Activated B cell treated with CpG ODN at 0.5 μM for 24 hours (primary cell): ENCODE measurements at regions of chr6 and their contacts with region 1.

Region 1: GRCh38 chr6:163956571-163957407 is 542.3 kb downstream of the QKI start:
- DNase-seq: peak; percentile 53
- ATAC-seq: peak; percentile 88
- H3K4me3 Mint-ChIP-seq: no peak overlapping the region
- H3K27ac Mint-ChIP-seq: no peak overlapping the region
- H3K4me1 Mint-ChIP-seq: peaks cover 5% of the 10 kb centered on the region
- H3K27me3 Mint-ChIP-seq: peaks cover 20% of the 10 kb centered on the region
- CTCF ChIP-seq: no peak

Region 2: DNA sequence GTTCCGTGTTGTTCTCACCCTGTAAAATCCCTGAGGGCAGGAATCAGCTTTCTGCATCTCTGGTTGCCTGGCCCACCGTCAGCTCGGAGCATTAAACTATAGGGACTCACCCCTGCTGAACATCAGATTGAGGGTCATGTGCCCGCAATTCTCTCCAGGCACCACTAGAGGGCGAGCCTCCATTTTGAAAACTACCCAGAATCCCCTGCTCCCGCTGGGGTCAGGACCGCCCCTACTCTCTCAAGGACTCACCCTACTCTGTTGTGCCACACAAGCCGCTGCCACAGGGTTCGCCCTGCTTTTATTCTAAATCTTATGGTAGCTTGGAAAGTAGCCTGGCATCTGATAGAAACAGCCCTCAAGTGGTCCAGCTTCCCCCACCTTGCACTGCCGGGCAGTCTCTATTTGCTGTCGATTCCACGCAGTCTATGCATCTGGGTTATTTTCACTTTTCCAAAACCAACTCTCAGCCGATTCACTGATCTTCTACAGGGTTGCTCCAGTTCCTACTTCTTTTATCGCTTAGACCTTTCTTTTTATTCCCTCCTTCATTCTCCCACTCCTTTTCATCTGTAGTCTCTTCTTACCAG is 786.4 kb before region 1 on chr6:
- CTCF ChIA-PET with region 1: interaction called, 10 read pairs
- POLR2A ChIA-PET with region 1: no interaction called
- intact Hi-C with region 1: no loop called
- DNase-seq: no peak
- ATAC-seq: peak; percentile 58
- H3K4me3 Mint-ChIP-seq: no peak overlapping the region
- H3K27ac Mint-ChIP-seq: no peak overlapping the region
- H3K4me1 Mint-ChIP-seq: no peaks in the 10 kb centered on the region
- H3K27me3 Mint-ChIP-seq: peaks cover 4% of the 10 kb centered on the region
- CTCF ChIP-seq: no peak

Region 3: DNA sequence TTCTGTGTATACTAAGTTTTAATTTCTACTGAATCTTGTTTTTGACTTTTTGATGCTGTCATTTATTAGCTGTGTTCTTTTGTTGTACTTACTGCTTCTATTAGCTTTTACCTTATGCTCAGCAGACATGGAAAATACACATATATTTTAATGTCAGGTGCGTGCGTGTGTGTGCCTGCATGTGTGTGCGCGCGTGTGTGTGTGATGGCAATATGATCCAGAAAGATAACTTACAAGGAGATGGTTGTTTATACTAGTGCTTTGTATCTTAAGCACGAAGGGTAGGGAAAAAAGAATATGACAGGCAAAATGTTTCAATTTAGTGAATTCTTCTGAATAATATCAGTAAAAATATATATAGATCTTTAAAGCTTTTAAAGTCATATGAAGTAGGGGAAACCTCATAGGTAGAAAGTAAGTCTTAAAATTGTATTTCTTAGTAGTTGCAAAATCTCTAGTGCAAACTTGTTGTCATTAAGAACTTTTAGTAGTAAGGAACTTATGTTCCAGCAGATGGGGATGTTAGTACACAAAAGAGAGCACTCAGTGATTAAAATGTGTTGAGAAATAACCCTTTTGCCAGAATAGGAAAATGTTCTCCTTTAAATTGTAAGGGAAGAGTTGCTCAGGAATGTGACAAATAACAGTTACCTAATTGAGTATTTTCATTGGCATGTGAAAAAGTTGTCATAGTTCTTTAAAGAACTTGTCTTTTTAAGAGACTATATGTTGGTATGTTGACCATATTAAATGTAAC is 529.1 kb before region 1 on chr6:
- CTCF ChIA-PET with region 1: interaction called, 28 read pairs
- POLR2A ChIA-PET with region 1: no interaction called
- intact Hi-C with region 1: loop called (anchors 1 kb)
- DNase-seq: no peak
- ATAC-seq: no peak
- H3K4me3 Mint-ChIP-seq: no peak overlapping the region
- H3K27ac Mint-ChIP-seq: no peak overlapping the region
- H3K4me1 Mint-ChIP-seq: peaks cover 45% of the 10 kb centered on the region
- H3K27me3 Mint-ChIP-seq: no peaks in the 10 kb centered on the region
- CTCF ChIP-seq: no peak

Region 4: DNA sequence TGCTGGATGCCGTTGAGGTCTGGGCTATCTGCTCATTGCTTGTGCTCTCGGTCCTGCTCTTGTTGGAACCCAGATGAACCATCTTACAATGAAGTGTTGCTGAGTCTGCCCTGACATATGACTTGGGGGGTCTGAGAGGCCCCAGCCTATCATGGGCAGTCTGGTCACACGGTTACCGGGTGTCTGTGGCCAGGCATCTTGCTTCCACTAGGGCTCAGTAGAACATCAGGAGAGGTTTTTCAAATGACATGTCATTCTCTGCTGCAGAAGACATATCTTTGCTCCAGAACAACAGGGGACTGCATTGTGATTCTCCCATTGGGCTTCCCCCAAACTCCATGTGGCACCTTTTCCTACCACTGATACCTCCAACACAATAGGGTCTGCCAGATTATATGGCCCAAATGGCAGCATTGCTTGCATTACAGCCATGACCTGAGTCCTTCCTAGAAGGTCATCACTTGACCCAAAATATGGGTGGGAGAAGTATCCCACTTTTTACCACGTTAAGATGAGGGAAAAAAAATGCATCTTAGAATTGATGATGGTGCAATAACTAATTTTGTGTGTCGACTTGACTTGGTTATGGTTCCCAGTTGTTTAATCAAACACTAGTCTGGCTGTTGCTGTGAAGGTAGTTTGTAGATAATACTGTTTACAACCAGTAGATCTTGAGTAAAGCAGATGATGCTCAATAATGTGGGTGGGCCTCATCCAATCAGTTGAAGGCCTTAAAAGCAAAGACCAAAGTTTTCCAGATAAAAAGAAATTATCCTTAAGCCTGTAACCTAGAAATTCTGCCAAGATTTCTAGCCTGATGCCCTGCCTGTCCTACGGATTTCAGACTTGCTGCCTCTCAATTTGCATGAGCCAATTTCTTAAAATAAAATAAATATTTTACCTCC is 301.3 kb before region 1 on chr6:
- CTCF ChIA-PET with region 1: interaction called, 3 read pairs
- POLR2A ChIA-PET with region 1: no interaction called
- intact Hi-C with region 1: loop called (anchors 1 kb)
- DNase-seq: no peak
- ATAC-seq: no peak
- H3K4me3 Mint-ChIP-seq: no peak overlapping the region
- H3K27ac Mint-ChIP-seq: no peak overlapping the region
- H3K4me1 Mint-ChIP-seq: peaks cover 19% of the 10 kb centered on the region
- H3K27me3 Mint-ChIP-seq: no peaks in the 10 kb centered on the region
- CTCF ChIP-seq: no peak

Region 5: GRCh38 chr6:163945808-163946207 is 11.0 kb before region 1 on chr6:
- CTCF ChIA-PET with region 1: interaction called, 12 read pairs
- POLR2A ChIA-PET with region 1: interaction called, 8 read pairs
- intact Hi-C with region 1: no loop called
- DNase-seq: no peak
- ATAC-seq: no peak
- H3K4me3 Mint-ChIP-seq: no peak overlapping the region
- H3K27ac Mint-ChIP-seq: no peak overlapping the region
- H3K4me1 Mint-ChIP-seq: peaks cover 7% of the 10 kb centered on the region
- H3K27me3 Mint-ChIP-seq: peaks cover 40% of the 10 kb centered on the region
- CTCF ChIP-seq: no peak